Psoas muscle (tissue), 8 donors: ENCODE measurements at regions of chr13 and their contacts with region 1.

Region 1: GRCh38 chr13:65789815-65790214 is 1440.3 kb downstream of the PCDH9 start:
- DNase-seq: no peak
- ATAC-seq: no peak
- H3K4me3 ChIP-seq: no peak overlapping the region
- H3K27ac ChIP-seq: no peak overlapping the region
- H3K4me1 ChIP-seq: no peaks in the 10 kb centered on the region
- H3K27me3 ChIP-seq: no peaks in the 10 kb centered on the region
- CTCF ChIP-seq: no peak

Region 2: DNA sequence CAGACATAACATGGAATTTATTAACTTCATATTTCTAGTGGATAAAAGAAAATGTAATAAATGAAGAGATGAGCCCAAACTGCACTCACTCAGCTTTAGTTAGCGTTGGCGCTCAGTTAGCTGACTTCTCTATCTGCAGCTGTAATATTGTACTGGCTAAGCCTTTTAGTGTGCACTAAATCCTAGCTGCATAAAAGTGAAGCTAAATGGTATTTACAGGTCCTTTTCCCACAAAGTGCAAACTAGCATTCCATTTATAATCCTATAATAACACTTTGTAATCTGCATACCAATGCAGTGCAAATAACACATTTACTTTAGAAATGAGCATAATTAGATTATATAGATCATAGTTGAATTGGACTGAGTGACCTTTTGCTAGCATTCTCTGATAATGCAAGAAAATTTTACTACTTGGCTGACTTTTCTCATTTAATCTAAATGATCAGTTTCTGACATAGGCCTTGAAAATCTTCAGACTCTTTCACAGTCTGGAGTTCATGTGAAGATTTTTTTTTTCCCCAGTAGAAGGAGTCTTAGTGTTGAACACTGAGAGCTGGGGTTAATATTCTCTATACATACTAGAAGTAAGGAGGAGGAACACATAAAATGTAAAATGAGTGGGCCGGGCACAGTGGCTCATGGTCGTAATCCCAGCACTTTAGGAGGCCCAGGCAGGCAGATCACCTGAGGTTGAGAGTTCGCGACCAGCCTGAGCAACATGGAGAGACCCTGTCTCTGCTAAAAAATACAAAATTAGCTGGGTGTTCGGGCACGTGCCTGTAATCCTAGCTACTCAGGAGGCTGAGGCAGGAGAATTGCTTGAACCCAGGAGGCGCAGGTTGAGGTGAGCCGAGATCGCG is 13.9 kb after region 1 on chr13:
- intact Hi-C with region 1: loop called in 1 of 2 experiments (anchors 1 kb)
- DNase-seq: no peak
- ATAC-seq: no peak
- H3K4me3 ChIP-seq: no peak overlapping the region
- H3K27ac ChIP-seq: no peak overlapping the region
- H3K4me1 ChIP-seq: no peaks in the 10 kb centered on the region
- H3K27me3 ChIP-seq: no peaks in the 10 kb centered on the region
- CTCF ChIP-seq: no peak